CD14-positive monocyte (primary cell): ENCODE measurements at regions of chr1 and their contacts with region 1.

Region 1: DNA sequence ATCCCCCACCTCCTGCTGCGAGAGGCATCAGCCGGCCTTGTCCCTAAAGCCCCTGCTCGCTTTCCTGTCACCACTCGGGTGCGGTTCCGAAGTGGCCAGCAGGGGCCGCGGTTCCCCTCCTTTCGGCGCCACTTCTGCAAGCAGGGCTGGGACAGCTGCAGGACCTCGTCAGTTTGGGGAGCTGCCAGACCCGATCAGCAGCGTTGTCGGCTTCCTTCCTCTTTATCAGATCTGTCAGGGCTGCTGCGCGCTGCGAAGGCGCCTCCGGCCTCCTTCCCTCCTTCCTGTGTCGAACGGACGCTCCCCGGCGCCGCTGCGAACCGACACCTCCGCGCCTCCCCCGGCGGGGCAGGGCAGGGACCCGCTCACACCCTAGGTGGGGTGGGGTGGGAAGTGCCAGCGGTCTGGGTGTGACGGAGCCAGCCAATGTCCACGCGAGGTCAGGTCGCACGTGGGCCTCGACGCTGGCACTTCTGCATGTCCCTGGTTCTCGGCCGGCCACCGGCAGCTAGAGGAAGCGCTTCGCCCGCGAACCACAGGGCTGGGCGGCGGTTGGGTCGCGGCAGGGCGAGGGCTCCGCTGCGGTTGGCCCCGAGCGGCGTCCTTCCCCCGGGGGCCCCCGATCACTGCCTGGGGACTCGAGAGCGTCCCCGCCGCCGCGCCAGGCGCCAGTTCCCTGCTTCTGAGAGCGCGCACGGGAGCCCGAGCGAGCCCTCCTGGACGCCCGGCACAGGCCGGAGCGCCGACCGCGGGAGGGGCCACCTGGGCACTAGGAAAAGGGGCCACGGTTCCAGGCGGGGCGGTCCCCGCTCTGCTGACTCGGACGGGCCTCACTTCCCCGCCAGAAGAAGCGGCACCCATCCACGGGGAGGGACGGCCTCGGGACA is 81.8 kb downstream of the RUNX3 start:
- DNase-seq: peak; percentile 95 to 97 (median 96)
- H3K4me3 ChIP-seq: peak overlapping the region; percentile 36 to 70 (median 43)
- H3K4me3 Mint-ChIP-seq: peak overlapping the region; percentile 65 to 71
- H3K27ac ChIP-seq: peak overlapping the region; percentile 79 to 90
- H3K27ac Mint-ChIP-seq: peak overlapping the region; percentile 76 to 91 (median 88)
- H3K4me1 ChIP-seq: peaks cover 20 to 29% of the 10 kb centered on the region in 2 donors
- H3K4me1 Mint-ChIP-seq: peaks cover 20% of the 10 kb centered on the region
- H3K27me3 ChIP-seq: no peaks in the 10 kb centered on the region
- H3K27me3 Mint-ChIP-seq: peaks cover 0 to 10% (median 9%) of the 10 kb centered on the region in 3 donors
- CTCF ChIP-seq: peak; percentile 94

Region 2: GRCh38 chr1:24463776-24464735 is 384.2 kb before region 1 on chr1:
- intact Hi-C with region 1: no loop called
- DNase-seq: no peak
- H3K4me3 ChIP-seq: no peak overlapping the region
- H3K4me3 Mint-ChIP-seq: no peak overlapping the region
- H3K27ac ChIP-seq: no peak overlapping the region
- H3K27ac Mint-ChIP-seq: peak overlapping the region in 1 of 7 donors; percentile 68
- H3K4me1 ChIP-seq: peaks cover 3 to 26% of the 10 kb centered on the region in 2 donors
- H3K4me1 Mint-ChIP-seq: peaks cover 30% of the 10 kb centered on the region
- H3K27me3 ChIP-seq: no peaks in the 10 kb centered on the region
- H3K27me3 Mint-ChIP-seq: peaks cover 0 to 1% (median 0%) of the 10 kb centered on the region in 3 donors
- CTCF ChIP-seq: no peak

Region 3: DNA sequence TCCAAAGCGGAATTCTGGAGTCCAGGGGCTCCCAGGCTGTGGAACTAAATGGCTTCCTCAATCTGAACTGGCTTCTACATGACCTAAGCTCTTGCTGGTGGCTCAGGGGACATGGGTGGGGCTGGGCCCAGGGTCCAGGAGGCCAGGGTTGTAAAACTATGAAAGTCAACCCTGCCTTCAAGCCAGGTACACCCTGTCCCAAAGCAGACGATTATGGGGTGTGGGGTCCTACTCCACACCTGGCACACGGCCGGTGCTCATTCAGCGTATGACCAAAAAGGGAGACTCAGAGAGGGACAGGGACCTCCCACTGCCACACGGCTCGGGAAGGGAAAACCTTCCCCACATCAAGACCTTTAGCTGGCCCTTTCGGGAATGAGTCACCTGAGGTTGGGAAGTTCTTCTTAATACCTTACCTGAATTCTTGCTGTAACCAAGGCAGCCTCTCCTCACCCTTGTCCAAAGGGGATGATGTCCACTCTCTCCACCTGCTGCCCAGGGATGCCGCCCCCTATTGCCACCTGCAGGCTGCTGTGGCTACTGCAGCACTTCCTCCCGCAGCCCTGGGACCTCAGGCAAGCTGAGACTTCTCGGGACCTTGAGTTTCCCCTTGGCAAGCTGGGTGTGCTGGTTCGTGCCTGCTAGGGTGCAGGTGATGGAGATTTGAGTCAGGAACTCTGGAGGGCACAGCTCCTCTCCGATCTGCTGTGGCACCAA is 49.7 kb after region 1 on chr1:
- intact Hi-C with region 1: loop called (anchors 2 to 5 kb)
- DNase-seq: peak; percentile 40 to 61 (median 53)
- H3K4me3 ChIP-seq: no peak overlapping the region
- H3K4me3 Mint-ChIP-seq: no peak overlapping the region
- H3K27ac ChIP-seq: no peak overlapping the region
- H3K27ac Mint-ChIP-seq: peak overlapping the region in 1 of 7 donors; percentile 63
- H3K4me1 ChIP-seq: no peaks in the 10 kb centered on the region
- H3K4me1 Mint-ChIP-seq: peaks cover 3% of the 10 kb centered on the region
- H3K27me3 ChIP-seq: peaks cover 0 to 4% of the 10 kb centered on the region in 2 donors
- H3K27me3 Mint-ChIP-seq: peaks cover 3 to 16% (median 3%) of the 10 kb centered on the region in 3 donors
- CTCF ChIP-seq: peak; percentile 93

Region 4: DNA sequence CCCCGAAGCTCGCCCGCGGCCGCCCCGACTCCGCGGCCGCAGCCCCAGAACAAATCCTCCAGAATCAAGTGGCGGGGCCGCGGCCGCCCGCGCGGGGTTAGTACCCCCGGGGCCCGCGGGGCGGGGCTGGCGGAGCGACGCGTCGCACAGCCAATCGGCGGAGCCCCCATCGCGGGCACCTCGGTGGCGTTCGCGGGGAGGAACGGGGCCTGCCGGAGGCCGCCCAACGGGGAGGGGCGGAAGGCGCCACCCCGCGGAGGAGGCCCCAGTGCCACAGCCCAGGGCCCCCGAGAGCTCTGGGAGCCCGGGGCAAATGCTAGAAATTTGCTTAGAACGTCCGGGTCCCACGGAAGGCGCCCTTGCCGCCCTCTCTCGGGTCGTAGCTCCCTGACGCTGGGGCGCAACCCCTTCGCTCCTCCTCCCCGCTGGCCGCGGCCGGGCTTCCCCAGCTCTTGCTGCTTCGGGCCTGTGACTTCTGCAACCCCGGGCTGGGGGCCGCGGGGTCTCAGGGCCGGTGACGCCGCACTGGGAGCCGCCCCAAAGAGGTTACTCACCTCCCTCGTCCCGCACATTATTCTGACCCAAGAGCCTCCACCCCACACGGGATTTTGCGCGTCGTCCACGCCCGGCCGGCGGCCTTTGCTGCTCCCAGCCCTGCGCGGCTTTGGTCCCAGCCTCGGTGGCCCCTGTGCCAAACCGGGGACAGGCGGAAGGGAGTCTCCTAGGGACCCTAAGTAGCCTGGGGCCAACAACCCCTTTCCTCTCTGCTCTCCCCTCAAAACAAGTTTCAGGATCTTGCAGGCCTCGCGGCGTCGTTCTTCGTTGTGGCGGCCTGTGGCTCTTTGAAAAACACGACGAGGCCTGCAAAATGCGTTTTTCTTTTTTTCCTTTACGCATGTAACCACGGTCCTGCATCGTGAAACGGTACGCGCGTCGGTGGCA is 82.2 kb after region 1 on chr1 and contains the start of gene RUNX3:
- intact Hi-C with region 1: loop called (anchors 5 kb)
- DNase-seq: peak; percentile 78 to 85 (median 83)
- H3K4me3 ChIP-seq: peak within 1 kb of the TSS; percentile 68 to 85 (median 69)
- H3K4me3 Mint-ChIP-seq: peak within 1 kb of the TSS; percentile 93
- H3K27ac ChIP-seq: peak within 1 kb of the TSS; percentile 47 to 81
- H3K27ac Mint-ChIP-seq: peak within 1 kb of the TSS; percentile 84 to 93 (median 89)
- H3K4me1 ChIP-seq: peaks cover 39 to 57% of the 10 kb centered on the region in 2 donors
- H3K4me1 Mint-ChIP-seq: peaks cover 35% of the 10 kb centered on the region
- H3K27me3 ChIP-seq: peaks cover 0 to 59% of the 10 kb centered on the region in 2 donors
- H3K27me3 Mint-ChIP-seq: peaks cover 26 to 69% (median 68%) of the 10 kb centered on the region in 3 donors
- CTCF ChIP-seq: peak; percentile 30
- polyA plus RNA-seq, gene RUNX3: 4.4 to 27.9 (median 6.7) TPM

Region 5: DNA sequence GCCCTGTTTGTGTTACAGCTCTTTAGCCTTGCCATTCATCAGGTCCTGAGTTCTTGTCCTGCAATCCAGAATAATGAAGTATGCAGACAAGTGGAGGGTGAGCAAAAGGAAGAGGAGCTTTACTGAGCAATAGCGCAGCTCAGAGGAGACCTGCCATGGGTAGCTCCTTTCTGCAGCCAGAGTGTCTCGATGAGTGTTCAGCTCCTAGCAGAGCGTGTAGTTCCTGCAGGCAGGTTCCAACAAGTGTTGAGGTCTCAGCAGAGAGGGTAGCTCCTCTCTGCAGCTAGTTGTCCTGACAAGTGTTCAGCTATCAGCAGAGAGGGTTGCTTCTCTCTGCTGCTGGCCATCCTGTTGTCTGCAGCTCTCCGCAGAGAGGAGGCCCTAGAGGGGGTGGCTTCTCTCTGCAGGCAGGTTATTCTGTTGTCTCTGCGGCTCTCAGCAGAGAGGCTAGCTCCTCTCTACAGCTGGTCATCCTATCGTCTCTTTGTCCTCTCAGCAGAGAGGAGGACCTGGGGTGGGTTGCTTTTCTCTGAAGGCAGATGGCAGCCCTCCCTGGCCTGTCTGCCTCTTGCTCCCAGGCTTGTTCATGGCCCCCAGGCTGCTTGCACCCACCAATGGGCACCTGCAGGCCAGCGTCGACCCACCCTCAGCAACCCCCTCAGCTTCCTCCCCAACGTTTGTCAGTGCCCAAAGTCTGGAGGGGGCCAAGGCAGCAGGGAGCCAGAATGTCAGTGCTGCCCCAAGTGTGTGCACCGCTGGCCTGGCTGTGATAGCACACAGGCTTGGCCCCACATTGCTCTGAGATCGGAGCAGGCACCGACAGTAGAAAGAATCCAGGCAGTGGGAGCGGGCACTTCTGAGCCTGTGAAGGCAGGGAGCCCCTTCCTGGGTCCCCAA is 194.3 kb after region 1 on chr1:
- intact Hi-C with region 1: loop called in 1 of 2 experiments (anchors 5 kb)
- DNase-seq: no peak
- H3K4me3 ChIP-seq: no peak overlapping the region
- H3K4me3 Mint-ChIP-seq: peak overlapping the region in 1 of 2 donors; percentile 7
- H3K27ac ChIP-seq: no peak overlapping the region
- H3K27ac Mint-ChIP-seq: peak overlapping the region in 1 of 7 donors; percentile 11
- H3K4me1 ChIP-seq: no peaks in the 10 kb centered on the region
- H3K4me1 Mint-ChIP-seq: peaks cover 4% of the 10 kb centered on the region
- H3K27me3 ChIP-seq: no peaks in the 10 kb centered on the region
- H3K27me3 Mint-ChIP-seq: peaks cover 4 to 14% (median 11%) of the 10 kb centered on the region in 3 donors
- CTCF ChIP-seq: no peak

Region 6: GRCh38 chr1:25099343-25099951 is 251.2 kb after region 1 on chr1:
- intact Hi-C with region 1: loop called (anchors 5 kb)
- DNase-seq: peak; percentile 78 to 88 (median 79)
- H3K4me3 ChIP-seq: no peak overlapping the region
- H3K4me3 Mint-ChIP-seq: peak overlapping the region in 1 of 2 donors; percentile 69
- H3K27ac ChIP-seq: peak overlapping the region; percentile 1 to 7
- H3K27ac Mint-ChIP-seq: peak overlapping the region in 2 of 7 donors; percentile 67 to 80
- H3K4me1 ChIP-seq: peaks cover 32% of the 10 kb centered on the region in 2 donors
- H3K4me1 Mint-ChIP-seq: peaks cover 39% of the 10 kb centered on the region
- H3K27me3 ChIP-seq: no peaks in the 10 kb centered on the region
- H3K27me3 Mint-ChIP-seq: peaks cover 6 to 14% (median 7%) of the 10 kb centered on the region in 3 donors
- CTCF ChIP-seq: no peak

Region 7: GRCh38 chr1:25204797-25205480 is 356.7 kb after region 1 on chr1:
- intact Hi-C with region 1: loop called (anchors 2 kb)
- DNase-seq: peak; percentile 33 to 64 (median 54)
- H3K4me3 ChIP-seq: no peak overlapping the region
- H3K4me3 Mint-ChIP-seq: no peak overlapping the region
- H3K27ac ChIP-seq: no peak overlapping the region
- H3K27ac Mint-ChIP-seq: no peak overlapping the region
- H3K4me1 ChIP-seq: no peaks in the 10 kb centered on the region
- H3K4me1 Mint-ChIP-seq: peaks cover 4% of the 10 kb centered on the region
- H3K27me3 ChIP-seq: no peaks in the 10 kb centered on the region
- H3K27me3 Mint-ChIP-seq: peaks cover 2 to 6% (median 6%) of the 10 kb centered on the region in 3 donors
- CTCF ChIP-seq: peak; percentile 84